ENCODE measurements at regions of chr22 and their contacts with region 1.

Region 1: DNA sequence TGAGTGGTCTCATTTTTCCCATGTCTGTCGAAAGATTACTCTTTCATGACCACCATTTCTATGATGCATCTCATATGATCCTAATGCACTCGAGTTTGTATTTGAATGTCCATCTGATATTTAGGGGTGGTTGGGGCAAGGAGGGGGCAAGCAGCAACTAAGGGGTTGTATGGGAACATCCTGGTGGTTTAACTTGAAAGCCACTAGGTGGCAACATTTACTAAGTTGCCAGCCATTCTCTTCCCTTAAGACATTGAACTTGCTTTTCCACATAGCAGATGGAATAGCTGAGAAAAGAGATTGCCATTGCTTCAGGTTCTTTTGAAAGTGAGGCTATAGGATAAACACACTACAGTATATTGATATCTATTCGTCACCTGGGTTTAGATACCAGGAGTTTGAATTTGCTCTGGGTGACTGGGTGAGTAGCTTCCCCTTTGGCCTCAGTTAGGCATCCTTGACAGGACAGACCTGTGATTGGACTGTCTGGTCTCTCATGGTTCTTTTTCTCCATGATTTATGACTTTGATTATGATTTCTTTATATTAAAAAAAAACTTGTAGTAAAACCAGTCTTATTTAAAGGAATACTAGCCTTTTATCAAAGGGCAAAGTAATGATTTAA is 32.4 kb downstream of the NF2 start:
- DNase-seq: no peak
- H3K4me3 ChIP-seq: no peak overlapping the region
- CTCF ChIP-seq: no peak
- POLR2A ChIP-seq: no peak

Region 2: GRCh38 chr22:29704528-29705285 is 68.9 kb after region 1 on chr22:
- intact Hi-C with region 1: no loop called
- DNase-seq: no peak
- H3K4me3 ChIP-seq: no peak overlapping the region
- CTCF ChIP-seq: no peak
- POLR2A ChIP-seq: no peak

Region 3: DNA sequence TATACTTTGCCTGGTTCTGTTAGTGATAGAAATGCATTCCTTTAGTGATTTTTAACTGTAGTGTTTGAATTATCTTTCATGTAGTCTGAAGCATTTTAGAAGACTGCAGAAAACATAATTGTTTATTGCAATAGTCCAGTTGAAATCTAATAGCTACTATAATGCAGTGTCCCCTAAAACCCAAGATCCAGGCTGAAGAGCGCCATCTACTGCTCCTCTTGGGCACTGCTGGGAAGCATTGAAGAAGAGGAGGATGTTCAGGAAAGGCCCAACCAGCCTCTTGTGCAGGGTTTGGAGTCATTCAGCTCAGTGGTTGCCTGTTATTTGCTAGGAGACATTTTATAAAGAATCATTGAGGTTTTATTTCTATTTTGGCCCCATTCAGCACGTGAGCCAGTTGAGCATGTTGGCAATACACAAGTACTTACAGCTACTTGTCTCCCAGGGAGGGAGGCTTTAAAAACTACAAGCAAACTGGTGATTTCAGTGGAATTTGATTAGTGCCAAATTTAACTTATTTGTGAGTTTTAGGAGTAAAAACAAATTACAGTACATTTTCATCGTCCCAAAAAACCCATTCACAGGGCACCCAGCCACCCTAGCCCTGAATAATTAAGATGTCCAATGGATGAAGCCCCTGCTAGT is 369.5 kb after region 1 on chr22:
- intact Hi-C with region 1: loop called (anchors 10 kb)
- DNase-seq: peak; percentile 72 to 92
- H3K4me3 ChIP-seq: no peak overlapping the region
- CTCF ChIP-seq: peak in 2 of 3 donors; percentile 47 to 60
- POLR2A ChIP-seq: no peak

Region 4: GRCh38 chr22:30079952-30080533 is 444.2 kb after region 1 on chr22 and contains the start of gene HORMAD2:
- intact Hi-C with region 1: loop called (anchors 10 kb)
- DNase-seq: no peak
- H3K4me3 ChIP-seq: no peak within 1 kb of the TSS
- CTCF ChIP-seq: no peak
- POLR2A ChIP-seq: no peak
- total RNA-seq, gene HORMAD2: not detected

Region 5: DNA sequence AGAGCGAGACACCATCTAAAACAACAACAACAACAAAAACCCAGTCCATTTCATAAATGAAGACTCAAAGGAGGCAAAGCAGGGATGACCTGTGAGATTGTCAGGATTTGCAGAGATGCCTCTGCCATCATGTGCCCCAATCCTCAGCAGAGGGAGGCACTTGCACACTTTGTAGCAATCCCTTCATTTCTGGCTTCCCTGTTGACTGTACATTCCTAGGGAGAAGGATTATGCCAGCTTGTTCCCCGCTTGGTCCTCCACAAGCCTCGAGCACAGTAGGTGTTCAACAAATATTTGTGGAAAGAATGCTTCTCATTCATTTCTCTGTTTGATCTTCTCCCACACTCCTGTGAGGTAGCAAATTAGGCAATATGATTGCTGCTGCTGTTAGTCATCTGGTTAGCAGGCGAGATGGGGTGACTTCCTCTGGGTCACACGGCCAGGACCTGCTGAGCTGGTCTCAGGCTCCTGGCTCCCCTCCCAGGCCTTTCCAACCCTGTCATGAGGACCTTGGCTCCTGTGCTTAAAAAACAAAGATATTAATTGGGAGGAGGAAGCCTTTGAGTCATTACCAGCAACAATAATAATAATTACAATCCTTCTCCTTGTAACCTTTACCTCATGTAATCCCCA is 576.6 kb after region 1 on chr22:
- intact Hi-C with region 1: loop called (anchors 5 kb)
- DNase-seq: peak; percentile 87 to 95
- H3K4me3 ChIP-seq: no peak overlapping the region
- CTCF ChIP-seq: no peak
- POLR2A ChIP-seq: no peak

Measured in lower leg skin (tissue), 4 donors.